Panc1 (cell line): ENCODE measurements at regions of chr3 and their contacts with region 1.

Region 1: GRCh38 chr3:44529927-44530326 is 25.1 kb upstream of the ZKSCAN7 start:
- DNase-seq: no peak
- ATAC-seq: no peak
- H3K4me3 ChIP-seq: no peak overlapping the region
- H3K27ac ChIP-seq: no peak overlapping the region
- H3K4me1 ChIP-seq: no peaks in the 10 kb centered on the region
- H3K27me3 ChIP-seq: no peaks in the 10 kb centered on the region
- CTCF ChIP-seq: peak; percentile 39; the same call in 1 of the 2 replicates

Region 2: DNA sequence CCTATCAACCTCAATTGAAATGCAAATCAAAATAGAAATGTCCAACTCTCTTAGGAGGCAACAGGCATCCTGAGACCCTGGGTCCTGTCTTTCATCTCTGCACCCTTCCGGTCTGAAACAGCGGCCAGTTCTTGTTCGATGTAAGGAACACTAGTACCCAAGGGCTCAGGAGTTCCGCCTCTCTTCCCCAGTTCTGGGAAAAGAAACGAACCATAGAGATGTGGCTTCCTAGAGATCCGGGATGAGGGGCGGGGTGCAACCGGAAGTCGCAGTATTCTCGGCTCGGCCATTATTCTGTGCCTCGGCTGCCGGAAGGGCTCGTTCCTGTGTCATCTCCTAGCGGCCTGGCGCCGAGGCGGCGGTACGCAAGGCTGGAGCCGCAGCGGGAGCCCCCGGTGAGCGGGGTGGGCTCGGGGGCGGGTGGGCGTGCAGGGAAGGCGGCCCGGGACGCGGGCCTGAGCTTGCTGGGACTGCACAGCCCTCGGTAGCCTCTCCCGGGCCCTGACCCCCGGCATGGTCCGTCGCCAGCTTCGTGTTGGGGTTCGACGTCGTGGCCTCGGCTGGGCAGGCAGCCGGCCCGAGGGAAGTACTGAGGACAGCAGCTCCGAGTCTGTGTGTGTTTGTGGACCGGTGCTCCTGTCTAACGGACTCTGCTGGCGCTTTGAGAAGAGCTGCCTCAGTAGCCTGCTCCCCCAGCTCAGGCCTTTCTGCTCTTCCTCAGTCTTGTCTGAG is 95.0 kb after region 1 on chr3 and contains the start of gene ZNF197:
- CTCF ChIA-PET with region 1: no interaction called
- POLR2A ChIA-PET with region 1: no interaction called
- in situ Hi-C with region 1: no loop called
- intact Hi-C with region 1: loop called (anchors 10 kb)
- DNase-seq: no peak
- ATAC-seq: peak; percentile 99
- H3K4me3 ChIP-seq: peak within 1 kb of the TSS; percentile 76 to 81
- H3K27ac ChIP-seq: peak within 1 kb of the TSS; percentile 86
- H3K4me1 ChIP-seq: 0 out of 2 replicates have a peak, but pooled peaks cover 2% of the 10 kb centered on the region
- H3K27me3 ChIP-seq: no peaks in the 10 kb centered on the region
- CTCF ChIP-seq: no peak
- total RNA-seq, gene ZNF197: 7.0 TPM

Region 3: GRCh38 chr3:44913868-44914468 is 384.0 kb after region 1 on chr3:
- CTCF ChIA-PET with region 1: interaction called, 5 read pairs
- POLR2A ChIA-PET with region 1: no interaction called
- in situ Hi-C with region 1: no loop called
- intact Hi-C with region 1: loop called (anchors 5 kb)
- DNase-seq: peak; percentile 47
- ATAC-seq: peak; percentile 89
- H3K4me3 ChIP-seq: no peak overlapping the region
- H3K27ac ChIP-seq: no peak overlapping the region
- H3K4me1 ChIP-seq: no peaks in the 10 kb centered on the region
- H3K27me3 ChIP-seq: no peaks in the 10 kb centered on the region
- CTCF ChIP-seq: peak; percentile 81

Region 4: GRCh38 chr3:45043728-45044299 is 513.9 kb after region 1 on chr3:
- CTCF ChIA-PET with region 1: no interaction called
- POLR2A ChIA-PET with region 1: no interaction called
- in situ Hi-C with region 1: no loop called
- intact Hi-C with region 1: no loop called
- DNase-seq: no peak
- ATAC-seq: no peak
- H3K4me3 ChIP-seq: no peak overlapping the region
- H3K27ac ChIP-seq: no peak overlapping the region
- H3K4me1 ChIP-seq: no peaks in the 10 kb centered on the region
- H3K27me3 ChIP-seq: no peaks in the 10 kb centered on the region
- CTCF ChIP-seq: no peak